ENCODE measurements at regions of chr15 and their contacts with region 1.

Region 1: DNA sequence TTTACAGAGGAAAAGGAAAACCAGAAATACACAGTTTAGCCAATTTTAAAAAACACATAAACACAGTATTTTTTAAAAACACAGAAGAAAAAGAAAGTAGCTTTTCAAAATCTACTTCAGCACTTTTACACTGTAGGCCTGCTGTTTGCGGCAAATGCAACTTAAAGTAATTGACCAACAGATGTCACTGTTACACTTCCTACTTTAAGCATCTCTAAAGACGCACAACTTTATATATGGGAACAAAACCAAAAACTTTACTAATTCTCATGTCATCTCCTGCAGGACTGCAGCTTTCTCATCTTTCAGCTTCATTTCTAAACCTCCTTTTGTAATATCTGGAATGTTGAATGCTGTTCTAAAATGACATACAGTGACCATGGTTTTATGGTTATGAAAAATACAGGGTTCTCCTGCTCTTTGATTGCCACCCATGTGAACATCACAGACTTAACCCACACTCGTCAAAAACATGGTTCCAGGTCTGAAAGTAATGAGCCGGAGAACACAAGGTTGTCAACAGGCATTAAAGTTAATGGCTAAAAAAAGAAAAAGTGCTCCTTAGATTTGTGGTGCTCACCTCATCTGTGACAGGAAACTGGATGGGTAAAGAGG is 107.9 kb downstream of the FMN1 start:
- DNase-seq: peak; percentile 16
- ATAC-seq: peak; percentile 62
- H3K4me3 ChIP-seq: no peak overlapping the region
- H3K27ac ChIP-seq: no peak overlapping the region
- H3K4me1 ChIP-seq: no peaks in the 10 kb centered on the region
- H3K27me3 ChIP-seq: peaks cover 0 to 3% of the 10 kb centered on the region in 2 experiments; a peak in 2 of 4 replicates
- CTCF ChIP-seq: peak; percentile 44 to 64 (median 63); a peak in 5 of 6 replicates
- EP300 ChIP-seq: no peak
- POLR2A ChIP-seq: no peak
- RAD21 ChIP-seq: peak; percentile 65

Region 2: GRCh38 chr15:32918547-32918946 is 168.1 kb before region 1 on chr15:
- CTCF ChIA-PET with region 1: no interaction called
- POLR2A ChIA-PET with region 1: no interaction called
- RAD21 ChIA-PET with region 1: no interaction called
- SMC1A ChIA-PET with region 1: no interaction called
- in situ Hi-C with region 1: no loop called
- intact Hi-C with region 1: no loop called
- DNase-seq: no peak
- ATAC-seq: no peak
- H3K4me3 ChIP-seq: no peak overlapping the region
- H3K27ac ChIP-seq: no peak overlapping the region
- H3K4me1 ChIP-seq: no peaks in the 10 kb centered on the region
- H3K27me3 ChIP-seq: no peaks in the 10 kb centered on the region; a peak in 1 of 4 replicates
- CTCF ChIP-seq: no peak
- EP300 ChIP-seq: no peak
- POLR2A ChIP-seq: no peak
- RAD21 ChIP-seq: no peak

Region 3: GRCh38 chr15:33067456-33067855 is 19.2 kb before region 1 on chr15:
- CTCF ChIA-PET with region 1: no interaction called
- POLR2A ChIA-PET with region 1: no interaction called
- RAD21 ChIA-PET with region 1: no interaction called
- SMC1A ChIA-PET with region 1: no interaction called
- in situ Hi-C with region 1: no loop called
- intact Hi-C with region 1: no loop called
- DNase-seq: no peak
- ATAC-seq: no peak
- H3K4me3 ChIP-seq: no peak overlapping the region
- H3K27ac ChIP-seq: no peak overlapping the region
- H3K4me1 ChIP-seq: no peaks in the 10 kb centered on the region
- H3K27me3 ChIP-seq: peaks cover 3 to 6% of the 10 kb centered on the region in 2 experiments; a peak in 3 of 4 replicates
- CTCF ChIP-seq: no peak
- EP300 ChIP-seq: no peak
- POLR2A ChIP-seq: no peak
- RAD21 ChIP-seq: no peak

Region 4: GRCh38 chr15:33126559-33127290 is 40.1 kb after region 1 on chr15:
- CTCF ChIA-PET with region 1: interaction called, 25 read pairs
- POLR2A ChIA-PET with region 1: no interaction called
- RAD21 ChIA-PET with region 1: interaction called, 12 read pairs
- SMC1A ChIA-PET with region 1: interaction called, 5 read pairs
- in situ Hi-C with region 1: loop called (anchors 5 kb)
- intact Hi-C with region 1: loop called (anchors 5 kb)
- DNase-seq: no peak
- ATAC-seq: no peak
- H3K4me3 ChIP-seq: no peak overlapping the region
- H3K27ac ChIP-seq: no peak overlapping the region
- H3K4me1 ChIP-seq: no peaks in the 10 kb centered on the region
- H3K27me3 ChIP-seq: no peaks in the 10 kb centered on the region
- CTCF ChIP-seq: no peak
- EP300 ChIP-seq: no peak
- POLR2A ChIP-seq: no peak
- RAD21 ChIP-seq: no peak

Region 5: GRCh38 chr15:33132722-33133345 is 46.2 kb after region 1 on chr15:
- CTCF ChIA-PET with region 1: interaction called, 25 read pairs
- POLR2A ChIA-PET with region 1: no interaction called
- RAD21 ChIA-PET with region 1: interaction called, 12 read pairs
- SMC1A ChIA-PET with region 1: interaction called, 5 read pairs
- in situ Hi-C with region 1: loop called (anchors 5 kb)
- intact Hi-C with region 1: loop called (anchors 5 kb)
- DNase-seq: no peak
- ATAC-seq: peak; percentile 55
- H3K4me3 ChIP-seq: no peak overlapping the region
- H3K27ac ChIP-seq: no peak overlapping the region
- H3K4me1 ChIP-seq: no peaks in the 10 kb centered on the region
- H3K27me3 ChIP-seq: no peaks in the 10 kb centered on the region; a peak in 2 of 4 replicates
- CTCF ChIP-seq: peak; percentile 40 to 46 (median 42); a peak in 4 of 6 replicates
- EP300 ChIP-seq: no peak
- POLR2A ChIP-seq: no peak
- RAD21 ChIP-seq: peak; percentile 61

Region 6: DNA sequence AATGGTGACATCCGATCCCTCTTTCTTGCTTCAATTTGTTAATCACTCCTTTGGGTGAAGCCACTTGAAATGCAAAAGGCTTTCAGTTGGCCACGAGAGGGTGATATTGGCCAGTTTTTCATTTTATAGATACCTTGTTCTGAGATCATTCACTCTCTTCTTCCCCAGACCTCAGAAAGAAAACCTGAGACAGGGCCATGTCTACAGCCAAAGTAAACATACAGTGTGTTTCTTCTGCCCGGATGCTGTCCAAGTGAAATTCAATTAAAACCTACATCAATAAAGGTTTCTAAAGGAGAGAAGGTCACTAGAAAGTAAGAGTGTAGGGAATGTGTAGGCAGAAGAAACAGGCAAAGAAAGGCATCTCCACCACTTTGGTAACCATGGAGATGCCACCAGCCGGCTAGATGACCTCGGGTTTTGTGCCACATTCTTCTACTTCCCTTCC is 147.4 kb after region 1 on chr15:
- CTCF ChIA-PET with region 1: interaction called, 5 read pairs
- POLR2A ChIA-PET with region 1: no interaction called
- RAD21 ChIA-PET with region 1: interaction called, 3 read pairs
- SMC1A ChIA-PET with region 1: no interaction called
- in situ Hi-C with region 1: no loop called
- intact Hi-C with region 1: loop called (anchors 5 kb)
- DNase-seq: no peak
- ATAC-seq: peak; percentile 58
- H3K4me3 ChIP-seq: no peak overlapping the region
- H3K27ac ChIP-seq: no peak overlapping the region
- H3K4me1 ChIP-seq: no peaks in the 10 kb centered on the region
- H3K27me3 ChIP-seq: no peaks in the 10 kb centered on the region; a peak in 1 of 4 replicates
- CTCF ChIP-seq: peak; percentile 33 to 47 (median 40); a peak in 5 of 6 replicates
- EP300 ChIP-seq: no peak
- POLR2A ChIP-seq: no peak
- RAD21 ChIP-seq: peak; percentile 48

Region 7: GRCh38 chr15:33380406-33380805 is 293.8 kb after region 1 on chr15:
- CTCF ChIA-PET with region 1: no interaction called
- POLR2A ChIA-PET with region 1: no interaction called
- RAD21 ChIA-PET with region 1: no interaction called
- SMC1A ChIA-PET with region 1: no interaction called
- in situ Hi-C with region 1: no loop called
- intact Hi-C with region 1: loop called (anchors 10 kb)
- DNase-seq: no peak
- ATAC-seq: no peak
- H3K4me3 ChIP-seq: no peak overlapping the region
- H3K27ac ChIP-seq: no peak overlapping the region
- H3K4me1 ChIP-seq: no peaks in the 10 kb centered on the region
- H3K27me3 ChIP-seq: peaks cover 0 to 2% of the 10 kb centered on the region in 2 experiments; a peak in 1 of 4 replicates
- CTCF ChIP-seq: no peak
- EP300 ChIP-seq: no peak
- POLR2A ChIP-seq: no peak
- RAD21 ChIP-seq: no peak